ENCODE measurements at regions of chr4 and their contacts with region 1.

Region 1: GRCh38 chr4:168694648-168695047 is 197.8 kb downstream of the PALLD start:
- DNase-seq: no peak
- ATAC-seq: peak; percentile 20

Region 2: GRCh38 chr4:168585168-168586091 is 109.2 kb before region 1 on chr4:
- intact Hi-C with region 1: loop called (anchors 10 kb)
- DNase-seq: peak; percentile 87
- ATAC-seq: peak; percentile 91

Region 3: GRCh38 chr4:168612450-168613139 is 82.1 kb before region 1 on chr4:
- intact Hi-C with region 1: no loop called
- DNase-seq: no peak
- ATAC-seq: no peak

Region 4: GRCh38 chr4:168743601-168744000 is 49.0 kb after region 1 on chr4:
- intact Hi-C with region 1: no loop called
- DNase-seq: no peak
- ATAC-seq: peak; percentile 44

Measured in Right ventricle myocardium superior (tissue), 1 donor.